ENCODE measurements at regions of chr10 and their contacts with region 1.

Region 1: DNA sequence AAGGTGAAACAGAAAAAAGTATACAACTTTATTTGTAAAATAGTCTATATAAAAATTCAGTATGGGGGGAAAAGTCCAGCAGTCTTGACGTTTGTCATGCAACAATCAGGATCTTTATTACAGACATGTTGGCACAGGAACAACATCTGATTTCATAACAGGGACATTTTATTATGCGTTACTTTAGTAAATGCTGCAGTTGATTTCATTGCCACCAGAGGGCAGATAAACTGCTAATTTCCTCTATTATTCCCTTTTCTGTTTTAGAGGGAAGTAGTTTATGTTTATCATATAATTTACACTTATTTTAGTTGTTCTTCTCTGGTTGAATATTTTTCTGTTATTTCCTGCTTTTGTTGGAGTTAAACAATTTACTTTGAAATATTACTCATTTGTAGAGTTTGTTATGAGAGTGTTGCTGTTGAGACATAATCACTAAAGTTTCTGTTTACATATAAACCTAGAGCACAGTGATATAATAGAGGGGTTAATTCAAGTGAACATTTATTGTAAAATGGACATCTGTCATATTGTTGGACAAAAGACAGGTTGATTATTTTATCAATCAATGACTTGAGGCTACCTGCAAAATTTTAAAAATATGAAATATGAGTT is 3.3 kb downstream of the PLXDC2 start:
- DNase-seq: peak; percentile 71
- ATAC-seq: no peak
- H3K4me3 ChIP-seq: no peak overlapping the region
- H3K27ac ChIP-seq: no peak overlapping the region
- H3K4me1 ChIP-seq: no peaks in the 10 kb centered on the region
- H3K27me3 ChIP-seq: peaks cover 42% of the 10 kb centered on the region
- CTCF ChIP-seq: peak; percentile 72

Region 2: DNA sequence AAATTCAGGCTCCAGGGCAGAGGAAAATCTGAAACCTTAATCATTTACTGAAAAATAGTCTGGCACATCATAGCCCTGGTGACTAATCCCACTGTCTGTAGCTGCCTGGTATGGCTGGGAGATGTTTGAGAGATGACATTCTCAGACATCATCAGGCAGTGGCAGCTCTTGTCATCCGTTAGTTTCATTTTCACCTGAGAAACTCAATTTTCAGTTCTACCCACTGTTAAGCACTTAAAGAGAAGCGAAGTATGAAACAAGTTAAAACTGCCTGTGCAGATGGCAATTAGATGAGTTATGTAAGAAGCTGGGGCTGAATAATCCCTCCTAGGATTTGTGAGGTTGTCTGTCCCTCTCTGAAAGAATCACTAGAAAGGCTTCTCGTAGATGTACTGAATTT is 1318.3 kb before region 1 on chr10:
- CTCF ChIA-PET with region 1: interaction called, 10 read pairs
- POLR2A ChIA-PET with region 1: no interaction called
- intact Hi-C with region 1: no loop called
- DNase-seq: peak; percentile 47
- ATAC-seq: peak; percentile 90
- H3K4me3 ChIP-seq: peak overlapping the region; percentile 55
- H3K27ac ChIP-seq: no peak overlapping the region
- H3K4me1 ChIP-seq: 0 out of 2 replicates have a peak, but pooled peaks cover 8% of the 10 kb centered on the region
- H3K27me3 ChIP-seq: no peaks in the 10 kb centered on the region
- CTCF ChIP-seq: no peak

Region 3: GRCh38 chr10:19756919-19757318 is 62.6 kb before region 1 on chr10:
- CTCF ChIA-PET with region 1: no interaction called
- POLR2A ChIA-PET with region 1: no interaction called
- intact Hi-C with region 1: no loop called
- DNase-seq: no peak
- ATAC-seq: no peak
- H3K4me3 ChIP-seq: no peak overlapping the region
- H3K27ac ChIP-seq: no peak overlapping the region
- H3K4me1 ChIP-seq: no peaks in the 10 kb centered on the region
- H3K27me3 ChIP-seq: no peaks in the 10 kb centered on the region
- CTCF ChIP-seq: no peak

Region 4: GRCh38 chr10:20162123-20162522 is 342.6 kb after region 1 on chr10:
- CTCF ChIA-PET with region 1: no interaction called
- POLR2A ChIA-PET with region 1: no interaction called
- intact Hi-C with region 1: no loop called
- DNase-seq: no peak
- ATAC-seq: no peak
- H3K4me3 ChIP-seq: no peak overlapping the region
- H3K27ac ChIP-seq: no peak overlapping the region
- H3K4me1 ChIP-seq: no peaks in the 10 kb centered on the region
- H3K27me3 ChIP-seq: no peaks in the 10 kb centered on the region
- CTCF ChIP-seq: no peak

Region 5: DNA sequence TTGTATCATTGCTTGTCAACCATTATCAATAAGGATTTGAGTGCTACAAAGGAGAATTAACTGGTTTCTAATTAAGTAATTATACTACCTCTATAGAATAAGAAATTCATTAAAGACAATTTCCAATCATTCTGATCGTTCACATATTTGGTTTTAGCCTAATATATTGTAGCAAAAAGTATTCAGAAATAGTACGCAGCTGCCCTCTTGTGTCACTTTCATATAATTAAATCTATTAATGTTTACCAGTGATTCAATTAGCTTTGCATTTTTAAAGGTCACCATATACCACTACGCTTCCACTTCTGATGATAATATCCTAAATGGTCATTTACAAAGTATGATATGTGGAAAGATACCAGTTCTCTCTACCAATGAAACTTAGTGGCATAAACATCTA is 949.3 kb after region 1 on chr10:
- CTCF ChIA-PET with region 1: interaction called, 3 read pairs
- POLR2A ChIA-PET with region 1: no interaction called
- intact Hi-C with region 1: loop called (anchors 2 kb)
- DNase-seq: peak; percentile 19
- ATAC-seq: no peak
- H3K4me3 ChIP-seq: no peak overlapping the region
- H3K27ac ChIP-seq: no peak overlapping the region
- H3K4me1 ChIP-seq: peaks cover 12% of the 10 kb centered on the region
- H3K27me3 ChIP-seq: peaks cover 3% of the 10 kb centered on the region; the same call in 1 of the 2 replicates
- CTCF ChIP-seq: peak; percentile 47; the same call in 1 of the 2 replicates